HCT116 (cell line): ENCODE measurements at regions of chr6 and their contacts with region 1.

Region 1: DNA sequence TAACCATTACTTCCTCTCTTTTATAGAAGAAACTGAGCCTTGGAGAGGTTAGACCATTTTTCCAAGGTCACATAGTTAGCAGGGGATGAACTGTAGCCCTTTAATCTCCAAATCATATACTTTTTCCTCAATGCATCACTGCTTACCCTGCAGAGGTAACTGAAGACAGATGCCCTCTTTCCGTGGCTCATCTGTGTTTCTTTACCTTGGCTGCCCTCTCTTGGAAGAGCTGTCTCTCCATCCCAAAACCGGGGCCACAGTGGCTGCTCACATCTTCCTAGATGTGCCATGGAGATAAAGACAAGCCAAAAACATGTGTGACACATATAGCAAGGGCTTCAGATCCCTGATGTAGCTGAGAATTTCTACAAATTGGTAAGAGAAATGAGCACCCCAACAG is 581 bp upstream of the ALDH8A1 start:
- DNase-seq: no peak
- ATAC-seq: no peak
- H3K4me3 ChIP-seq: no peak overlapping the region
- H3K27ac ChIP-seq: no peak overlapping the region
- H3K4me1 ChIP-seq: no peaks in the 10 kb centered on the region; a peak in 1 of 4 replicates
- H3K27me3 ChIP-seq: no peaks in the 10 kb centered on the region
- CTCF ChIP-seq: no peak
- POLR2A ChIP-seq: no peak
- RAD21 ChIP-seq: no peak

Region 2: DNA sequence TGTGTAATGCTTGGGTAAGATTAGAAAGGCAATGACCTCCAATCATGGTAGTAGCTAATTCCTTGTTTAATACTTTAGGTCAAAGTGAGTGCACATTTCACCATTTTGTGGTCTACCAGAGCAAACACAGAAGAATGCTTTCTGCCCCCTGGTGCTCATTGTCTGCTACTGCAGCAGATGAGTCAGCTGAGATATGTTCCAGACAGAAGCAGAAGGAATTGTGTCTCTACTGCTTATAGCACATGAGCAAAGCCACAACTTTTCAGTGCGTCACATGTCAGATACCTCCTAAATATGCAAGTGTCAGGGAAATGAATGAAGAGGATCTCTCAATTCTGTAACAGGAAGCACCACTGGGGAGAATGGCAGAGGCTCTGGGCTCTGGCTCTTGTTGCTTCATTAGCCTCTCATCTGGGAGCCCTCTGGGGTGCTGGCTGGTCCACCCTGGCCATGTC is 309.5 kb before region 1 on chr6:
- CTCF ChIA-PET with region 1: no interaction called
- POLR2A ChIA-PET with region 1: no interaction called
- RAD21 ChIA-PET with region 1: no interaction called
- intact Hi-C with region 1: loop called (anchors 10 kb)
- DNase-seq: peak; percentile 58
- ATAC-seq: peak; percentile 79
- H3K4me3 ChIP-seq: no peak overlapping the region
- H3K27ac ChIP-seq: no peak overlapping the region
- H3K4me1 ChIP-seq: peaks cover 10 to 25% of the 10 kb centered on the region in 2 experiments; a peak in 3 of 4 replicates
- H3K27me3 ChIP-seq: no peaks in the 10 kb centered on the region
- CTCF ChIP-seq: peak; percentile 65 to 93 (median 86)
- POLR2A ChIP-seq: no peak
- RAD21 ChIP-seq: peak; percentile 87